Psoas muscle (tissue), 8 donors: ENCODE measurements at regions of chr13 and their contacts with region 1.

Region 1: DNA sequence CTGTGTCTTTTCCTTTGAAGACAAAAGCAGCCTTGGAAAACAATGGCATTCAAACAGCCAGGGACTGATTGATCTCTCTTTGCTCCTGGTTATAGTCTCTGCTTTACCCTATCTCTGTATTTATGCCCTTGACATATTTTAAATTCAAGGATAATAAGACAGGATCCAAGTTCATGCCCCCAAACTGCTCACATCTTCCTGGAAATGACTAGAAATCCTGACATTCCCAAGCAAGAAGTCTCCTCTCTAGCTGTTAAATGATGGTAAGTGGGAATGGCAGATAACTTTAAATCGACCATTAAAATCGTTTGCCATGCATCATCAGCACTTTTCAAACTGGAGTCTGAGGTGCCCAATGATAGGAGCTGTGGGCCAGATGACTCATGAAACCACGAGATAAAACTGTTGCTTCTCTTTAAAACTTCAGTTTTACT is 435.6 kb downstream of the FOXO1 start:
- DNase-seq: no peak
- ATAC-seq: no peak
- H3K4me3 ChIP-seq: no peak overlapping the region
- H3K27ac ChIP-seq: no peak overlapping the region
- H3K4me1 ChIP-seq: peaks cover 34% of the 10 kb centered on the region
- H3K27me3 ChIP-seq: no peaks in the 10 kb centered on the region
- CTCF ChIP-seq: no peak

Region 2: DNA sequence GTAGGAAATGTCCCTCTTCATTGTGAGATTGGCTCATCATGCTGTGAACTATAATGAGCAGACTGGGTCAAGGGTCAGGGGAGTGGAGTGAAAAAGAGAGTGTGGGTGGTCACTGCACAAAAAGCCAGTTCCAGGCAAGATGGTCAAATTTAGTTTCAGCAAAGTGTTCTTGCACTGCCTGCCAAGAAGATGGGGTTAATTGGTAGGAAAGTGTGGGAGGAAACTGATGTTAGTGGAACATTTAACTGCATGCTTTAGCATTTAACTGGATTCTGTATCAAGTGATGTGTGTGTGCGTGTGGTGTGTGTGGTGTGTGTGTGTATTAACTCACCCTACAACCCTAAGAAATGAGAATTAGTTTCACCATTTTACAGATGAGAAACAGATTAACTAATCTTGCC is 443.8 kb before region 1 on chr13:
- intact Hi-C with region 1: no loop called
- DNase-seq: no peak
- ATAC-seq: no peak
- H3K4me3 ChIP-seq: no peak overlapping the region
- H3K27ac ChIP-seq: no peak overlapping the region
- H3K4me1 ChIP-seq: no peaks in the 10 kb centered on the region
- H3K27me3 ChIP-seq: no peaks in the 10 kb centered on the region
- CTCF ChIP-seq: no peak

Region 3: DNA sequence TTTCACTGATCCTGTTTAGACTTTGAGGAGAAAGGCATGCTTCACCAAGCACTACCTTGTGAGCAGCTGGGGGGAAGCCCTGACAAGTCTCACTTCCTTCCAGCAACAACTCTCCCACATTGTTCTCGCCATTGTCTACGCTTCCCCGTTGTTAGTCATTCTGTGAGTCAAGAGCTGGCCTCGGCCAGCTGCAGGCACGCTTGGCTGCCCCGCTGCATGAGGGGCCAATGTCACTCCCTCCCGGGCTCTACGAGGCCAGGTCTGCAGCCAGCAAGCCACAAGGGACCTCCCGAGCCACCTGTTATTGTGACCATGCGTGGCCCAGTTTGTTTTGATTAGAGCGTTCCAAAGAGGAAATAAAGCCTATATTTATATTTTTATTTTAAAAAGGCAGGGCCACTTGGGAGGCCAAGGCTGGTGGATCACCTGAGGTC is 214.7 kb after region 1 on chr13:
- intact Hi-C with region 1: loop called in 1 of 2 experiments (anchors 10 kb)
- DNase-seq: peak; percentile 72 to 90
- ATAC-seq: peak; percentile 77 to 91 (median 86)
- H3K4me3 ChIP-seq: no peak overlapping the region
- H3K27ac ChIP-seq: peak overlapping the region; percentile 66
- H3K4me1 ChIP-seq: peaks cover 24% of the 10 kb centered on the region
- H3K27me3 ChIP-seq: no peaks in the 10 kb centered on the region
- CTCF ChIP-seq: no peak

Region 4: GRCh38 chr13:40564342-40565001 is 333.6 kb after region 1 on chr13:
- intact Hi-C with region 1: loop called in 1 of 2 experiments (anchors 10 kb)
- DNase-seq: no peak
- ATAC-seq: peak; percentile 17 to 32 (median 28)
- H3K4me3 ChIP-seq: peak overlapping the region; percentile 6
- H3K27ac ChIP-seq: peak overlapping the region; percentile 76
- H3K4me1 ChIP-seq: peaks cover 81% of the 10 kb centered on the region
- H3K27me3 ChIP-seq: no peaks in the 10 kb centered on the region
- CTCF ChIP-seq: peak; percentile 36

Region 5: DNA sequence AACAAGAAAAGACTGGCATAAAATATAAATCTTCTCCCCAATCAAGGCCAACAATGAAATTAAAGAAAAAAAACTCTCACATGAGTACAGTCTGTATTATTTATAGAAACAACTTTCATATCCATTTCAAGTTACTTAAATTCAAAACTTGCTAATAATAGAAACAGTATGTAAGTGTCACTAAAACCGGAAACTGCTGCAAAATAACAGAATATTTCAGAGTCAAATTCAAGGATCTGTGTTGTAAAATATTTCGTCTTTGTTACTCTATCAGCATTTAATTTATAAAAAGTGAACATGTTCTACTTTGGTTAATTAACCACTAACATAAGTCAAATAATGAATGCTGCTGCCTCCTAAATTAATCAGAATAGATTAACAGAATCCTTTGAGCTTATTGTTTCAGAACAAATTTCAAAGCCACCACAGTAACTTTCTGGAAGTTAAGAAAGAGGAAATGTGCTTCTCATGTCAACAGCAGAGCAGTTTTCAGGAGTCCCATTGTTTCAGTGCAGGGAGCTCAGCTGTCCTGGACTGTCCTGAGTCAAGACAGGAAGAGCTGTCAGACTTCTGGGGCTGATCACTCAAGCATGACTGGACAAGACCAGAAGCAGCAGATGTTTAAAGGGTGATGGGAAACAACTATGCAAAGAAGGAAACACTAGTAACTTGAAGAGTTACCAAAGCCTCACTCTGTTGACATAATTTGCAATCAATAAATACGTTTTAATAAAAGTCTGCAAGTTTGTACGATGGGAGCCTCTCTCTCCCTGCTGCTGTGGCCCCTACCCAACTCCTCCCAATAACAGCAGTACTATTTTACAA is 358.6 kb after region 1 on chr13:
- intact Hi-C with region 1: loop called in 1 of 2 experiments (anchors 2 kb)
- DNase-seq: peak; percentile 42 to 62
- ATAC-seq: peak; percentile 83 to 90 (median 86)
- H3K4me3 ChIP-seq: peak overlapping the region; percentile 40
- H3K27ac ChIP-seq: peak overlapping the region; percentile 90
- H3K4me1 ChIP-seq: peaks cover 89% of the 10 kb centered on the region
- H3K27me3 ChIP-seq: no peaks in the 10 kb centered on the region
- CTCF ChIP-seq: no peak